ENCODE measurements at regions of chr5 and their contacts with region 1.

Region 1: GRCh38 chr5:179623003-179623880 is at the start of gene HNRNPH1:
- DNase-seq: peak; percentile 98
- H3K4me3 ChIP-seq: peak within 1 kb of the TSS; percentile 91 to 100
- H3K27ac ChIP-seq: peak within 1 kb of the TSS; percentile 99 to 100
- H3K4me1 ChIP-seq: peaks cover 39% of the 10 kb centered on the region
- H3K27me3 ChIP-seq: no peaks in the 10 kb centered on the region
- CTCF ChIP-seq: peak in 1 of 3 experiments; percentile 23
- POLR2A ChIP-seq: peak; percentile 97
- total RNA-seq, gene HNRNPH1: 626 to 636 TPM

Region 2: GRCh38 chr5:179414459-179415261 is 208.6 kb before region 1 on chr5:
- intact Hi-C with region 1: no loop called
- DNase-seq: no peak
- H3K4me3 ChIP-seq: no peak overlapping the region
- H3K27ac ChIP-seq: no peak overlapping the region
- H3K4me1 ChIP-seq: no peaks in the 10 kb centered on the region
- H3K27me3 ChIP-seq: no peaks in the 10 kb centered on the region
- CTCF ChIP-seq: no peak
- POLR2A ChIP-seq: no peak

Region 3: GRCh38 chr5:179697993-179698934 is 75.0 kb after region 1 on chr5:
- intact Hi-C with region 1: loop called (anchors 10 kb)
- DNase-seq: peak; percentile 99
- H3K4me3 ChIP-seq: peak overlapping the region; percentile 80 to 97
- H3K27ac ChIP-seq: peak overlapping the region; percentile 91 to 97
- H3K4me1 ChIP-seq: peaks cover 18% of the 10 kb centered on the region
- H3K27me3 ChIP-seq: no peaks in the 10 kb centered on the region
- CTCF ChIP-seq: peak in 1 of 3 experiments; percentile 20
- POLR2A ChIP-seq: no peak